ENCODE measurements at regions of chr6 and their contacts with region 1.

Region 1: DNA sequence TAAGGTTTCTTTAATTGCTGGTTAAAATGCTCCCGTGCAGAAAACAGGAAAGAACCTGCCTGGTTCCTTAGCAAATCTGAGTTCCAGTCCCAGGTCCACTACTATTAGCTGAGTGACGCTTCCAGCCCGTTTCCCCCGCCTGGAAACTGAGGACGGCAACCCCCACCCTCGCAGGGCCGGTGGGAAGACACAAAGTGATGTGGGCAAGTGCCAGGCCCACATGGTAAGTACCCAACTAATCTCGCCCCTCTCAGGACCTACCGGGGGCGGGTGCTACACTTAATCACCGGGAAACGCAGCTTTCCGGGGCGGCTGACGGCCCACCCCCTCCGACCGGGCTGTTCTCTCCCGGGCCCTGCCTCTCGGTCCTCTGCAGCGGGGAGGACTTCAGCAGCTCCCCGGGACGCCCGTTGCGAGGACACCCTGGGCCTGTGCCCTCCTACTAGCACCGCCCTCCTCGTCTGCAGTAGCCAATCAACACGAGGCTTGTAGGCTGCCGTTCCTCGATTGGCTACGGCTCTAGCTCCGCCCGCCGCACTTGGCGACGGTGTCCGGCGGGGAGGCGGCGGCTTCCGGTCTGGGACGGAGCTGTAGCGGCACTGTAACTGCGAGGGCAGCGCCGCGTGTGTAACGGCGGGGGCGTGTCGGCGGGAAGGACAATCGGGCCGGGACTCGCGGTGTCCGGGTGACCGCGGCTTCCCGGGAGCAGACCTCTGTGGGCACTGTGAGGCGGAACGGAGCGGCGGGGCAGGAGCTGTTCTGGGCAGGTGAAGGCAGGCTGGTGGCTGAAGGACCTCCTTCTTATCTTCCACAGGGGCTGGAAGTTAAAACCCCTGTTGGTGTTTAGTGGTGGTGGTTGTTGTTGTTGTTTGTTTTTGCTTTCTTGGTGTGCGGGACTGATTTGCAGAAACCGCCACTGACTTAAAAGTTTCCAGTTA is at the start of gene ZBTB9:
- DNase-seq: peak; percentile 82 to 97 (median 92)
- ATAC-seq: peak; percentile 98
- H3K4me3 ChIP-seq: peak within 1 kb of the TSS; percentile 89
- H3K4me3 Mint-ChIP-seq: peak within 1 kb of the TSS; percentile 92
- H3K27ac ChIP-seq: peak within 1 kb of the TSS; percentile 55 to 60
- H3K27ac Mint-ChIP-seq: peak within 1 kb of the TSS; percentile 87
- H3K4me1 ChIP-seq: peaks cover 33% of the 10 kb centered on the region
- H3K4me1 Mint-ChIP-seq: peaks cover 41% of the 10 kb centered on the region
- H3K27me3 ChIP-seq: no peaks in the 10 kb centered on the region
- H3K27me3 Mint-ChIP-seq: no peaks in the 10 kb centered on the region
- CTCF ChIP-seq: no peak
- total RNA-seq, gene ZBTB9: 5.5 to 5.7 TPM

Region 2: GRCh38 chr6:32920715-32921114 is 533.6 kb before region 1 on chr6:
- CTCF ChIA-PET with region 1: no interaction called
- POLR2A ChIA-PET with region 1: no interaction called
- intact Hi-C with region 1: no loop called
- DNase-seq: no peak
- ATAC-seq: no peak
- H3K4me3 ChIP-seq: no peak overlapping the region
- H3K4me3 Mint-ChIP-seq: no peak overlapping the region
- H3K27ac ChIP-seq: no peak overlapping the region
- H3K27ac Mint-ChIP-seq: no peak overlapping the region
- H3K4me1 ChIP-seq: no peaks in the 10 kb centered on the region
- H3K4me1 Mint-ChIP-seq: no peaks in the 10 kb centered on the region
- H3K27me3 ChIP-seq: peaks cover 0 to 6% of the 10 kb centered on the region in 2 experiments
- H3K27me3 Mint-ChIP-seq: peaks cover 20% of the 10 kb centered on the region
- CTCF ChIP-seq: no peak

Region 3: GRCh38 chr6:33391278-33391921 is 62.9 kb before region 1 on chr6 and contains the start of gene KIFC1:
- CTCF ChIA-PET with region 1: interaction called, 11 read pairs
- POLR2A ChIA-PET with region 1: interaction called, 4 read pairs
- intact Hi-C with region 1: loop called (anchors 1 to 2 kb)
- DNase-seq: peak; percentile 98 to 100 (median 99)
- ATAC-seq: peak; percentile 86
- H3K4me3 ChIP-seq: peak within 1 kb of the TSS; percentile 65
- H3K4me3 Mint-ChIP-seq: peak within 1 kb of the TSS; percentile 87
- H3K27ac ChIP-seq: peak within 1 kb of the TSS; percentile 69 to 78
- H3K27ac Mint-ChIP-seq: peak within 1 kb of the TSS; percentile 91
- H3K4me1 ChIP-seq: peaks cover 25% of the 10 kb centered on the region
- H3K4me1 Mint-ChIP-seq: peaks cover 23% of the 10 kb centered on the region
- H3K27me3 ChIP-seq: no peaks in the 10 kb centered on the region
- H3K27me3 Mint-ChIP-seq: no peaks in the 10 kb centered on the region
- CTCF ChIP-seq: peak; percentile 99
- total RNA-seq, gene KIFC1: 1.2 to 1.6 TPM

Region 4: GRCh38 chr6:33417903-33418689 is 36.2 kb before region 1 on chr6 and contains the start of gene CUTA:
- CTCF ChIA-PET with region 1: no interaction called
- POLR2A ChIA-PET with region 1: interaction called, 24 read pairs
- intact Hi-C with region 1: loop called in 1 of 2 experiments (anchors 1 kb)
- DNase-seq: peak; percentile 97 to 100 (median 98)
- ATAC-seq: peak; percentile 85
- H3K4me3 ChIP-seq: peak within 1 kb of the TSS; percentile 82
- H3K4me3 Mint-ChIP-seq: peak within 1 kb of the TSS; percentile 92
- H3K27ac ChIP-seq: peak within 1 kb of the TSS; percentile 97 to 99
- H3K27ac Mint-ChIP-seq: peak within 1 kb of the TSS; percentile 98
- H3K4me1 ChIP-seq: peaks cover 77% of the 10 kb centered on the region
- H3K4me1 Mint-ChIP-seq: peaks cover 79% of the 10 kb centered on the region
- H3K27me3 ChIP-seq: no peaks in the 10 kb centered on the region
- H3K27me3 Mint-ChIP-seq: no peaks in the 10 kb centered on the region
- CTCF ChIP-seq: peak; percentile 30
- total RNA-seq, gene CUTA: 176 to 185 TPM

Region 5: GRCh38 chr6:33430991-33431879 is 23.0 kb before region 1 on chr6:
- CTCF ChIA-PET with region 1: no interaction called
- POLR2A ChIA-PET with region 1: interaction called, 45 read pairs
- intact Hi-C with region 1: loop called in 1 of 2 experiments (anchors 2 kb)
- DNase-seq: peak; percentile 74 to 92 (median 85)
- ATAC-seq: peak; percentile 66
- H3K4me3 ChIP-seq: peak overlapping the region; percentile 71
- H3K4me3 Mint-ChIP-seq: peak overlapping the region; percentile 93
- H3K27ac ChIP-seq: peak overlapping the region; percentile 52 to 64
- H3K27ac Mint-ChIP-seq: peak overlapping the region; percentile 92
- H3K4me1 ChIP-seq: peaks cover 63% of the 10 kb centered on the region
- H3K4me1 Mint-ChIP-seq: peaks cover 65% of the 10 kb centered on the region
- H3K27me3 ChIP-seq: no peaks in the 10 kb centered on the region
- H3K27me3 Mint-ChIP-seq: no peaks in the 10 kb centered on the region
- CTCF ChIP-seq: no peak

Region 6: DNA sequence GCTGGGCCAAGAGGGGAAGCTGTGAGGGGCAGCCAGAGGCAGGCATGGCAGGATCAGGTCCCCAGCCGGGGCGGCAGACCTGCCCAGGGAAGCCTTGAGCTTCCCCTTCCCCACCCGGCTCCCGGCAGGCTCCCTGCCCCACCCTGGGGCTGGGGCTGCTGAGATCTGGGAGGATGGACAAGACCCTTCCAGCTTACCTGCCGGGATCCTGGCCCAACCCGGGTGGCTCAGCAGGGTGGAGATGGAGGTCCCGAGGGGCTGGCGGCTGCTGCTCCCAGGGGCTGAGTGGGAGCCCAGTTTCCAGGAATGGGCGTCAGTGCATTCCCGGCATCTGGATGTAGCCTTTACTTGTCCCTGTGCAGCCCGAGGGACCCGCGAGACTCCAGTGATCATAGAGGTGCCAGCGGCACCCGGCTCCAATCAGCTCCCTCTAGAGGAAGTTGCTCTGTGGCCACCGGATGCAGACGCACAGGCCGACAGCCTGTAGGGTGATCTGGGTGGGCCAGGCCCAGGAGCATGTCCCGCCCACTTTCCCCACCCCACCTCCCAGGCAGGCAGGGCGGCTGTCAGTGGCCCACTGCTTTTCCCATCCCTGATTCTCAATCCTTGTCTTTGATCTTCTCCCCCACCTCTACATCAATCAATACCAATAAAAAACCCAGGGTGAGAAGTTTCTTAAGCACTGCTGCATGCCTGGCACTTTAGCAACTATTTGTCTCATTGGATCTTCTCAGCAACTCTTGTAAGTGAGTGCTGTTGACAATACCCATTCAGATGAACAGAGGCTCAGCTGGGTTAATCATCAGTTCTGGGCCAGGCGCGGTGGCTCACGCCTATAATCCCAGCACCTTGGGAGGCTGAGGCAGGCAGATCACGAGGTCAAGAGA is 125.8 kb after region 1 on chr6 and contains the start of gene BAK1:
- CTCF ChIA-PET with region 1: no interaction called
- POLR2A ChIA-PET with region 1: interaction called, 10 read pairs
- intact Hi-C with region 1: loop called in 1 of 2 experiments (anchors 1 kb)
- DNase-seq: peak; percentile 64 to 92 (median 78)
- ATAC-seq: peak; percentile 93
- H3K4me3 ChIP-seq: peak within 1 kb of the TSS; percentile 99
- H3K4me3 Mint-ChIP-seq: peak within 1 kb of the TSS; percentile 96
- H3K27ac ChIP-seq: peak within 1 kb of the TSS; percentile 82 to 88
- H3K27ac Mint-ChIP-seq: peak within 1 kb of the TSS; percentile 97
- H3K4me1 ChIP-seq: peaks cover 51% of the 10 kb centered on the region
- H3K4me1 Mint-ChIP-seq: peaks cover 44% of the 10 kb centered on the region
- H3K27me3 ChIP-seq: no peaks in the 10 kb centered on the region
- H3K27me3 Mint-ChIP-seq: no peaks in the 10 kb centered on the region
- CTCF ChIP-seq: peak; percentile 63
- total RNA-seq, gene BAK1: 38.3 to 40.8 TPM

Region 7: DNA sequence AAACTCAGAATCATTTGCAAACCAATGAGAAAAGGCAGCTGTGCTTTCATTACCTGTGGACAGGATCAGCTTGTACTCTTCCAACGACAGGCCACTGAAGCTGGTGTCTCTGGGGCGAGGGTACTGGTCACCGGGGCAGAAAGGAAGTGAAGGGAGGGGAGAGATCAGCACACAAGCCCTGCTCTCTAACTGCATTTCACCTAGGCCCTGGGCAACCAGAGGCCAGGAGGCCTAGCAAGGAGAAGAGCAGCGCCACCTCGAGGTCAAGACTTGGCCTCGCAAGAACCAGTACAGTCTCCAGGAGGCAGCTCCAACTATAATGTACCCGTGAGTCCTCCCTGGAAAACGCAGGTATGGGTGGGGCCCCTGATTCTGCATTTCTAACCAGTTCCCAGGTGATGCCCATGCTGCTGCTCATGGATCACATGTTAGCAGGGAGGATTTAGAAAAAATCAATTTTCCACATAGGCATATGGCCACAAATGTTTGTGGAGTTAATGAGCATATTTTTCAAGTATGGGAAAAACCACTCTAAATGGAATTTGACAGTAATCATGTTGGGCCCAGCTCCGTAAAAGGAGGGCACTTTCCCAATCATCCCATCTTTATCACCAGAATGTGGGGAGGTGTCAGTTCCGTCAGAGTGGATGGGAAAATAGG is 246.2 kb after region 1 on chr6:
- CTCF ChIA-PET with region 1: no interaction called
- POLR2A ChIA-PET with region 1: no interaction called
- intact Hi-C with region 1: loop called in 1 of 2 experiments (anchors 10 kb)
- DNase-seq: peak; percentile 60 to 88 (median 72)
- ATAC-seq: peak; percentile 58
- H3K4me3 ChIP-seq: no peak overlapping the region
- H3K4me3 Mint-ChIP-seq: no peak overlapping the region
- H3K27ac ChIP-seq: no peak overlapping the region
- H3K27ac Mint-ChIP-seq: peak overlapping the region; percentile 84
- H3K4me1 ChIP-seq: peaks cover 42% of the 10 kb centered on the region
- H3K4me1 Mint-ChIP-seq: peaks cover 50% of the 10 kb centered on the region
- H3K27me3 ChIP-seq: no peaks in the 10 kb centered on the region
- H3K27me3 Mint-ChIP-seq: no peaks in the 10 kb centered on the region
- CTCF ChIP-seq: peak; percentile 73